T-cell (primary cell): ENCODE measurements at regions of chr2 and their contacts with region 1.

Region 1: DNA sequence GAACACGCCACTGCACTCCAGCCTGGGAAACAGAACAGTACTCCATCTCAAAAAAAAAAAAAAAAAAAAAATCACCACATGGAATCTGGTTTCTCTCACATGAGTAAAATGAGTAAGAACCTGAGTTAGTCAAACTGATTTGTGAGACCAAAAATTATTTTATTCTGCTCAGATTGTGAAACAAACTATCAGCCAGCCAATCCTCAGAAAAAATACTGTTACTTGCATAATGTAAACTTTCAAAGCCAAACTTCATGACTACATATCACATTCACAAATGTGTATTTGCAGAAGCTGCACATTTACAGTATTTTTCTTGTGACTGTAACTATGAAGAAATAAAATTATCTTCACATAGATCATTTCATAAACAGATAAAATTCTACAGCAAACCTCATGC is 23.2 kb downstream of the SUMO1 start:
- DNase-seq: no peak
- ATAC-seq: no peak
- H3K4me3 ChIP-seq: no peak overlapping the region
- H3K4me3 Mint-ChIP-seq: no peak overlapping the region
- H3K27ac ChIP-seq: no peak overlapping the region
- H3K27ac Mint-ChIP-seq: no peak overlapping the region
- H3K4me1 ChIP-seq: no peaks in the 10 kb centered on the region
- H3K4me1 Mint-ChIP-seq: peaks cover 6 to 20% (median 14%) of the 10 kb centered on the region in 3 donors
- H3K27me3 ChIP-seq: no peaks in the 10 kb centered on the region
- H3K27me3 Mint-ChIP-seq: no peaks in the 10 kb centered on the region

Region 2: DNA sequence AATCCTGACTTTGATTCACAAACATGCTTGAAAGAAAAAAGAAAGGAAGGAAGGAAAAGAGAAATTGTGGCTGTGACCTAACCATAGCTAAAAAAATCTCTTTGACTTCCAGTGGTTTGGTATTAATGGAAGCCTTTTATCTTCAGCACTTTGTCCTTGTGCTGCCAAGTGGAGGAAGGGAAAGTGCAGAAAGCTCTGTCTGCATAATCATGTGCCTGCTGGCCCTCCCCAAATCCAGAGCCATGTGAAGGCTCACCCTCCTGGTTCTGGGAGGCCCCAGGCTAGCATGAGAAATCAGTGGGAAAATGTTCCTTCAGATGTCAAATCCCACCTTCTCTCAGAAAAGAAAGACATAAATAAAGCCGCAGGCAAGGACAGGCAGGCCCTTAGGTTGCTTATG is 112.7 kb after region 1 on chr2:
- CTCF ChIA-PET with region 1: no interaction called
- POLR2A ChIA-PET with region 1: no interaction called
- DNase-seq: no peak
- ATAC-seq: no peak
- H3K4me3 ChIP-seq: no peak overlapping the region
- H3K4me3 Mint-ChIP-seq: no peak overlapping the region
- H3K27ac ChIP-seq: no peak overlapping the region
- H3K27ac Mint-ChIP-seq: no peak overlapping the region
- H3K4me1 ChIP-seq: no peaks in the 10 kb centered on the region
- H3K4me1 Mint-ChIP-seq: no peaks in the 10 kb centered on the region
- H3K27me3 ChIP-seq: no peaks in the 10 kb centered on the region
- H3K27me3 Mint-ChIP-seq: no peaks in the 10 kb centered on the region

Region 3: GRCh38 chr2:202541137-202541536 is 326.0 kb after region 1 on chr2:
- CTCF ChIA-PET with region 1: no interaction called
- POLR2A ChIA-PET with region 1: no interaction called
- DNase-seq: no peak
- ATAC-seq: no peak
- H3K4me3 ChIP-seq: no peak overlapping the region
- H3K4me3 Mint-ChIP-seq: no peak overlapping the region
- H3K27ac ChIP-seq: no peak overlapping the region
- H3K27ac Mint-ChIP-seq: no peak overlapping the region
- H3K4me1 ChIP-seq: no peaks in the 10 kb centered on the region
- H3K4me1 Mint-ChIP-seq: no peaks in the 10 kb centered on the region
- H3K27me3 ChIP-seq: no peaks in the 10 kb centered on the region
- H3K27me3 Mint-ChIP-seq: no peaks in the 10 kb centered on the region

Region 4: GRCh38 chr2:202574541-202574940 is 359.4 kb after region 1 on chr2:
- CTCF ChIA-PET with region 1: no interaction called
- POLR2A ChIA-PET with region 1: interaction called in 1 of 2 experiments, 10 read pairs
- DNase-seq: no peak
- ATAC-seq: no peak
- H3K4me3 ChIP-seq: no peak overlapping the region
- H3K4me3 Mint-ChIP-seq: no peak overlapping the region
- H3K27ac ChIP-seq: no peak overlapping the region
- H3K27ac Mint-ChIP-seq: no peak overlapping the region
- H3K4me1 ChIP-seq: no peaks in the 10 kb centered on the region
- H3K4me1 Mint-ChIP-seq: no peaks in the 10 kb centered on the region
- H3K27me3 ChIP-seq: no peaks in the 10 kb centered on the region
- H3K27me3 Mint-ChIP-seq: no peaks in the 10 kb centered on the region

Region 5: DNA sequence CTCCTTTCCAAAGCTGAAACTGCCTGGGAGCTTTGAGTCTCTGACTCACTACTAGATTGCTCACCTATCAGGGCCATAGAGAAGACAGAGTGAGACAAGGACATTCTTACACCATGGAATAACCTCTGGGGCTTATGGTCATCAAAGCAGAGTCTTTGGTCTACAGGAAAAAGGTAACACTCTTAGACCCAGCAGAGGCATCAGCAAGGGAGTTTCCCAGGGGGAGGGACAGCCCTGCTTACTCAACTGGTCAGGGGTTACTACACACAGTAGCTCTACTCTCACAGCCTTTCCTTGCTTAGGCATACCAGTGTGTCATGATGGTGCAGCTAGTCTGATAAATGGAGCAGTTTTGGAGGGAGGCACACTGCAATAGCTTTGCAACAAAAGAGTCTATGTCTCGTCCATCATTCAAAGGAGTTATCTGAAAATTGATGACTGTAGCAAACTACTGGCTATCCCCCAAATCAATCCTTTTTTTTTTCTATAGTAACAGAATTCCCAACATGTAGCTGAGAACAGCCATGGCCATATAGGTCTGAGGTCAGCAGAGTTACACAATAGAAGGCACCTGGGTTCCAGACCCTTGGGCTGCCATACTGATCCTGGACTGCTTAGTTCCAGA is 1468.9 kb after region 1 on chr2:
- CTCF ChIA-PET with region 1: no interaction called
- POLR2A ChIA-PET with region 1: no interaction called
- DNase-seq: no peak
- ATAC-seq: no peak
- H3K4me3 ChIP-seq: no peak overlapping the region
- H3K4me3 Mint-ChIP-seq: no peak overlapping the region
- H3K27ac ChIP-seq: no peak overlapping the region
- H3K27ac Mint-ChIP-seq: no peak overlapping the region
- H3K4me1 ChIP-seq: peaks cover 6% of the 10 kb centered on the region in 2 experiments
- H3K4me1 Mint-ChIP-seq: peaks cover 27 to 37% (median 28%) of the 10 kb centered on the region in 3 donors
- H3K27me3 ChIP-seq: no peaks in the 10 kb centered on the region
- H3K27me3 Mint-ChIP-seq: no peaks in the 10 kb centered on the region